ENCODE measurements at regions of chr10 and their contacts with region 1.

Region 1: DNA sequence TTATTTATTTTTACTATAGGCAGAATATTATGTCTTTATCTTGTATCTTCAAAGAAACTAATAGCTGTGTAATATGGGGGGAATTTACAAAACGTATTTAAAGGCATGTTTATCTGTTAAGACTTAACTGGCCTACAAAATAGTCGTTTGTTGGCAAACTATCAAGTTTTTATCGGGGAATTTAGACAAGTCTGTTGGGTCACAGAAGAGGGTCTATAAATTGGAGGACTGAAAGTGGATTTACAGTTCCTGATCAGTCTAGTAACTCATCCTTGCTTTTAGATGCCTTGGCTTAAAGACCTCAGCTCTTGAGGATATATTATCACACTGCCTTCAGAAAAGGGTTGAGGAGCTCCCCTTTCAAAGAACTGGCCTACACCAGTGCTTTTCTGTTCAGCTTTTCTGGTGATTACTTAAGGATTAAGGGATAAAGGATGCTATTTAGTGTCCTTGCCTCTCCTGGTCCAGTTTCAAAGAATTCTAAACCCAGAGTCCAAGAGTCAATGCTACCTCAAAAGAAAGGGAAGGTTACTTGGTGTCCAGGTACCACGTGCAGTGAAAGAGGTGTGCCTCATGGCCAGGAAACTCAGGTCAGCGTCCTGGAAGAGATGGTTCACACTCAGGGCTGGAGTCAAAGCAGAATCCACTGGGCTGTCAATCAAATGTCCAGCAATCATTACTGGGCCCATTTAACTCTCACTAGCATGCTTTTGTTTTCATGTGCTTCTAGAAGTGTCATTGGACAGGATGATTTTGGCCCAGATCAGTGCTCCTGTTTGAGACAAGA is 42.9 kb upstream of the ABI1 start:
- DNase-seq: no peak
- ATAC-seq: no peak
- H3K4me3 ChIP-seq: no peak overlapping the region
- H3K4me3 Mint-ChIP-seq: no peak overlapping the region
- H3K27ac ChIP-seq: no peak overlapping the region
- H3K27ac Mint-ChIP-seq: no peak overlapping the region
- H3K4me1 ChIP-seq: no peaks in the 10 kb centered on the region
- H3K4me1 Mint-ChIP-seq: no peaks in the 10 kb centered on the region
- H3K27me3 ChIP-seq: no peaks in the 10 kb centered on the region
- H3K27me3 Mint-ChIP-seq: peaks cover 0 to 7% (median 2%) of the 10 kb centered on the region in 5 donors

Region 2: DNA sequence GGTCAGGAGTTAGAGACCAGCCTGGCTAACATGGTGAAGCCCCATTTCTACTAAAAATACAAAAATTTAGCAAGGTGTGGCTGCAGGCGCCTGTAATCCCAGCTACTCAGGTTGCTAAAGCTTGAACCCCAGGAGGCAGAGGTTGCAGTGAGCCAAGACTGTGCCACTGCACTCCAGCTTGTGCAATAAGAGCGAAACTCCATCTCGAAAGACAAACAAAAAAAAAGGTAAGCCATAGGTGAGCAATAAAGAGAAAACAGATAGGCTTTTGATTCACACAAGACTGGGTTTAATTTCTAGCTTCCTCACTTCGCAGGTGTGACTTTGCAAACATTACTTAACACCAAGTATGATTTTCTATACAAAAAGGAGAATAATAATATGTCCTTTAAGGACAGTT is 409.2 kb after region 1 on chr10:
- CTCF ChIA-PET with region 1: no interaction called
- POLR2A ChIA-PET with region 1: no interaction called
- intact Hi-C with region 1: loop called in 1 of 2 experiments (anchors 5 kb)
- DNase-seq: no peak
- ATAC-seq: no peak
- H3K4me3 ChIP-seq: no peak overlapping the region
- H3K4me3 Mint-ChIP-seq: no peak overlapping the region
- H3K27ac ChIP-seq: no peak overlapping the region
- H3K27ac Mint-ChIP-seq: no peak overlapping the region
- H3K4me1 ChIP-seq: no peaks in the 10 kb centered on the region
- H3K4me1 Mint-ChIP-seq: peaks cover 0 to 3% (median 0%) of the 10 kb centered on the region in 7 donors
- H3K27me3 ChIP-seq: no peaks in the 10 kb centered on the region
- H3K27me3 Mint-ChIP-seq: peaks cover 1 to 12% (median 7%) of the 10 kb centered on the region in 5 donors